ENCODE measurements at regions of chr5 and their contacts with region 1.

Region 1: DNA sequence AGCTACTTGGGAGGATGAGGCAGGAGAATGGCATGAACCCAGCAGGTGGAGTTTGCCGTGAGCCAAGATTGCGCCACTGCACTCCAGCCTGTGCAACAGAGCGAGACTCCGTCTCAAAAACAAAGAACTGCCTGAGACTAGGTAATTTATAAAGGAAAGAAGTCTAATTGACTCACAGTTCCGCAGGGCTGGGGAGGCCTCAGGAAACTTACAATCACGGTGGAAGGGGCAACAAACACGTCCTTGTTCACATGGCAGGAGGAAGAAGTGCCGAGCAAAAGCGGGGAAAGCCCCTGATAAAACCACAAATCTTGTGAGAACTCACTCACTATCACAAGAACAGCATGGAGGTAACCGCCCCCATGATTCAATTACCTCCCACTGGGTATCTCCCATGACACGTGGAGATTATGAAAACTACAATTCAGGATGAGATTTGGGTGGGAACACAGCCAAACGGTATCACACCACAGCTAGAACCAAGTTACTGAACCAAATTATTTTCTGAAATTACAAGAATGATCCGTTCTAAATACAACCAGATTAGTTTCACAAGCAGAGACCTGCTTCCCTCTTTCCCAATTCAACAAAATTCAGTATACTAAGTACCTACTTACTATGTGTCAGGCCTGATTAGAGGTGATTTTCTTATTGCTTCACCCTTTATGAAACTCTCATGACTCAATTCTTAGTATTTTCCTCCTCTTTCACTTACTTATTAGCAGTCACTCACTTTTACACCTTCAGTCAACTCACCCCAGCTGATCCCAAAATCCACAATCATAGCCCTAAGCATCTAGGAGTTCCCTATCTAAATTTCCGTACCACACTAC is 8.4 kb downstream of the UBTD2 start:
- DNase-seq: no peak
- ATAC-seq: no peak
- H3K4me3 ChIP-seq: no peak overlapping the region
- H3K27ac ChIP-seq: no peak overlapping the region
- H3K4me1 ChIP-seq: peaks cover 2% of the 10 kb centered on the region
- H3K27me3 ChIP-seq: no peaks in the 10 kb centered on the region
- CTCF ChIP-seq: no peak
- POLR2A ChIP-seq: no peak
- RAD21 ChIP-seq: no peak

Region 2: DNA sequence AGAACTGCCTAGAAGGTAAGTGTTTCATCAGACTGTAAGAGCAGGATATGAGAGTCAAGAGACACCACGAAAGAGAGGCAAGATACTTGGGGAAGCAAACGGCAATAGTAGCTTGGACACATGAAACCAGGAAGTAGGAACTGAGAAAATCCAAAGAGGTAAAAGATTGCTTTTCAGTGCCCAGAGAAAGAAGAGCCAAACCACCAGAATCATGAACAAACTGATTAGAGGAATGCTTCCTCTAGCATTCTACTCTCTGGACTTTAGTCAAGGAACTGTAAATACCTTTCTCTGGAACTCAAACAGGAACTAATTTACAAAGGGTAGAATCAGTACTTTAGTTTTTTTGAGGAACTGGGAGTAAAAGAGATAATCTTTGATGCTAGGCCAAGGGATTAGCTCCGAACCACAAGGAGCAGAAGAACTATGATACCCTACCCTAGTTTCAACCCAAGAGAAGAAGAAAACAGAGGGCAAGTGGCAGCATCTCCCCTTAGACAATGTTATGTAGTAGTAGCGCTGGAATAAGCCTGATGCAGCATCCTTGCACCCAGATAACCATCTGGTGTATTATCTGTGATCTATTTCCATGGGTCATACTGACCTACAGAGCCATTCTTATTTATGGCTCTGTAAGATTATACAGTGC is 39.9 kb before region 1 on chr5:
- CTCF ChIA-PET with region 1: no interaction called
- POLR2A ChIA-PET with region 1: no interaction called
- dilution Hi-C with region 1: no loop called
- in situ Hi-C with region 1: no loop called
- intact Hi-C with region 1: loop called (anchors 5 kb)
- DNase-seq: peak; percentile 7
- ATAC-seq: peak; percentile 45; the same call in 1 of the 2 replicates
- H3K4me3 ChIP-seq: no peak overlapping the region
- H3K27ac ChIP-seq: no peak overlapping the region
- H3K4me1 ChIP-seq: peaks cover 11% of the 10 kb centered on the region
- H3K27me3 ChIP-seq: no peaks in the 10 kb centered on the region
- CTCF ChIP-seq: no peak
- POLR2A ChIP-seq: no peak
- RAD21 ChIP-seq: no peak

Measured in IMR-90 (cell line).